ENCODE measurements at regions of chr16 and their contacts with region 1.

Region 1: GRCh38 chr16:4253394-4254150 is 11.7 kb upstream of the SRL start:
- DNase-seq: peak; percentile 99 to 100 (median 99)
- ATAC-seq: peak; percentile 94
- H3K4me3 ChIP-seq: peak overlapping the region; percentile 91
- H3K4me3 Mint-ChIP-seq: peak overlapping the region; percentile 96
- H3K27ac ChIP-seq: peak overlapping the region; percentile 86 to 88
- H3K27ac Mint-ChIP-seq: peak overlapping the region; percentile 96
- H3K4me1 ChIP-seq: peaks cover 18% of the 10 kb centered on the region
- H3K4me1 Mint-ChIP-seq: peaks cover 10% of the 10 kb centered on the region
- H3K27me3 ChIP-seq: no peaks in the 10 kb centered on the region
- H3K27me3 Mint-ChIP-seq: no peaks in the 10 kb centered on the region
- CTCF ChIP-seq: no peak

Region 2: GRCh38 chr16:3503523-3503922 is 750.0 kb before region 1 on chr16:
- CTCF ChIA-PET with region 1: no interaction called
- POLR2A ChIA-PET with region 1: no interaction called
- intact Hi-C with region 1: no loop called
- DNase-seq: peak; percentile 23 to 89 (median 62)
- ATAC-seq: peak; percentile 55
- H3K4me3 ChIP-seq: peak overlapping the region; percentile 25
- H3K4me3 Mint-ChIP-seq: peak overlapping the region; percentile 83
- H3K27ac ChIP-seq: peak overlapping the region; percentile 42 to 66
- H3K27ac Mint-ChIP-seq: peak overlapping the region; percentile 95
- H3K4me1 ChIP-seq: peaks cover 60% of the 10 kb centered on the region
- H3K4me1 Mint-ChIP-seq: peaks cover 72% of the 10 kb centered on the region
- H3K27me3 ChIP-seq: no peaks in the 10 kb centered on the region
- H3K27me3 Mint-ChIP-seq: no peaks in the 10 kb centered on the region
- CTCF ChIP-seq: no peak

Region 3: GRCh38 chr16:3880623-3881498 is 372.7 kb before region 1 on chr16 and contains the start of gene CREBBP:
- CTCF ChIA-PET with region 1: no interaction called
- POLR2A ChIA-PET with region 1: interaction called, 4 read pairs
- intact Hi-C with region 1: loop called in 1 of 2 experiments (anchors 5 kb)
- DNase-seq: peak; percentile 70 to 97 (median 86)
- ATAC-seq: peak; percentile 79
- H3K4me3 ChIP-seq: peak within 1 kb of the TSS; percentile 91
- H3K4me3 Mint-ChIP-seq: peak within 1 kb of the TSS; percentile 93
- H3K27ac ChIP-seq: no peak within 1 kb of the TSS
- H3K27ac Mint-ChIP-seq: peak within 1 kb of the TSS; percentile 94
- H3K4me1 ChIP-seq: peaks cover 37% of the 10 kb centered on the region
- H3K4me1 Mint-ChIP-seq: peaks cover 46% of the 10 kb centered on the region
- H3K27me3 ChIP-seq: peaks cover 0 to 2% of the 10 kb centered on the region in 2 experiments
- H3K27me3 Mint-ChIP-seq: peaks cover 8% of the 10 kb centered on the region
- CTCF ChIP-seq: no peak
- total RNA-seq, gene CREBBP: 145 to 152 TPM

Region 4: DNA sequence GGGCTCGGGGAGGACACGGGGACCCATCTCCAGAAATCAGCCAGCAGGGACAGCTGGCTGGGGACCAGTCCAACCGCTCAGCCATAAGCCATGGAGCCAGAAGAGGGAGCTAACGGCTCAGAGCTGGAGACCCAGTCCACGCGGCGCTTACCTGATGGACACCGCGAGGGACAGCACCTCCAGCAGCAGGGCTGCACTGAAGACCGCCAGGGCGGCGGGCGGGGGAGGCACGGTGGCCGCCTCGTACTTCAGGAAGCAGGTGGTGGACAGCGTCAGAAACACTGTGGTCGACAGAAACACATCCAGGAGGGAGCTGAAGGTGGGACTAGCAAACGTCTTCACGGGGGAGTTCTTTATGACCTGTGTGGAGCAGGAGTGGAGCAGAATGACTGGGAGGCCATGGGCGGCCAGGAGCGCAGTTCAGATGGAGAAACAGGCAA is 270.5 kb before region 1 on chr16:
- CTCF ChIA-PET with region 1: interaction called, 10 read pairs
- POLR2A ChIA-PET with region 1: interaction called, 4 read pairs
- intact Hi-C with region 1: loop called in 1 of 2 experiments (anchors 5 kb)
- DNase-seq: peak in 12 of 14 experiments; percentile 12 to 72 (median 28)
- ATAC-seq: peak; percentile 76
- H3K4me3 ChIP-seq: no peak overlapping the region
- H3K4me3 Mint-ChIP-seq: no peak overlapping the region
- H3K27ac ChIP-seq: no peak overlapping the region
- H3K27ac Mint-ChIP-seq: no peak overlapping the region
- H3K4me1 ChIP-seq: peaks cover 6% of the 10 kb centered on the region
- H3K4me1 Mint-ChIP-seq: no peaks in the 10 kb centered on the region
- H3K27me3 ChIP-seq: no peaks in the 10 kb centered on the region
- H3K27me3 Mint-ChIP-seq: no peaks in the 10 kb centered on the region
- CTCF ChIP-seq: peak; percentile 36

Region 5: GRCh38 chr16:4266372-4266771 is 12.8 kb after region 1 on chr16:
- CTCF ChIA-PET with region 1: interaction called, 83 read pairs
- POLR2A ChIA-PET with region 1: interaction called, 179 read pairs
- intact Hi-C with region 1: loop called (anchors 1 kb)
- DNase-seq: no peak
- ATAC-seq: no peak
- H3K4me3 ChIP-seq: no peak overlapping the region
- H3K4me3 Mint-ChIP-seq: no peak overlapping the region
- H3K27ac ChIP-seq: no peak overlapping the region
- H3K27ac Mint-ChIP-seq: peak overlapping the region; percentile 27
- H3K4me1 ChIP-seq: peaks cover 16% of the 10 kb centered on the region
- H3K4me1 Mint-ChIP-seq: peaks cover 14% of the 10 kb centered on the region
- H3K27me3 ChIP-seq: no peaks in the 10 kb centered on the region
- H3K27me3 Mint-ChIP-seq: no peaks in the 10 kb centered on the region
- CTCF ChIP-seq: no peak

Region 6: DNA sequence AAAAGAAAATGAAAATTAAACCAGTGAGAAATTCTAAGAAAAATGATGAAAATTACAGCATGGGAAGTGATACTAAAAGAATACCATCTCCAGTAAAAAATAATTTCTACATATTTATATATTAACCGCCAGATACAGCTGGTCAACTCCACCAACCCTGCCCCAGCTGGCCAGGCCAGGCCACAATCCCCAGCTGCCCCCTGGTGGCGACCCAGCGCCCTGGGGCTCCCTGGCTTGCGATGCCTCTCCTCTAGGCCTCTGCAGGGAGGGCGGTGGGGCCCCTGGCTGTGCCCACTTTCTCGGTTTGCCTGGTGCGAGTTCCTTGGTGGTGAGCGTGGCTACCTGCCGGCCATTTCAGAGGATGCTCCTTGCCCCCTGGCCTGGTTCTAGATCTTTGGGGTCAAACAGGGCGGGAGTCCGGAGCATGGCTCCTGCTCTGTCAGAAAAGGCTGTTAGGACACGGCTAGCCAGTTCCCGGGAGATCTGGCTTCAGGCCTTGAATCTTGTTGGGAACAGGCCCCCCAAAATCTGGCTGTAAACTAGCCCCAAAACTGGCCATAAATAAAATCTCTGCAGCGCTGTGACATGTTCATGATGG is 76.8 kb after region 1 on chr16:
- CTCF ChIA-PET with region 1: interaction called, 10 read pairs
- POLR2A ChIA-PET with region 1: interaction called, 6 read pairs
- intact Hi-C with region 1: no loop called
- DNase-seq: peak; percentile 52 to 82 (median 65)
- ATAC-seq: peak; percentile 63
- H3K4me3 ChIP-seq: no peak overlapping the region
- H3K4me3 Mint-ChIP-seq: no peak overlapping the region
- H3K27ac ChIP-seq: no peak overlapping the region
- H3K27ac Mint-ChIP-seq: no peak overlapping the region
- H3K4me1 ChIP-seq: peaks cover 19% of the 10 kb centered on the region
- H3K4me1 Mint-ChIP-seq: no peaks in the 10 kb centered on the region
- H3K27me3 ChIP-seq: peaks cover 4 to 9% of the 10 kb centered on the region in 2 experiments
- H3K27me3 Mint-ChIP-seq: no peaks in the 10 kb centered on the region
- CTCF ChIP-seq: peak; percentile 91

Region 7: GRCh38 chr16:5143761-5144620 is 890.4 kb after region 1 on chr16:
- CTCF ChIA-PET with region 1: no interaction called
- POLR2A ChIA-PET with region 1: no interaction called
- intact Hi-C with region 1: no loop called
- DNase-seq: no peak
- ATAC-seq: no peak
- H3K4me3 ChIP-seq: no peak overlapping the region
- H3K4me3 Mint-ChIP-seq: no peak overlapping the region
- H3K27ac ChIP-seq: no peak overlapping the region
- H3K27ac Mint-ChIP-seq: no peak overlapping the region
- H3K4me1 ChIP-seq: no peaks in the 10 kb centered on the region
- H3K4me1 Mint-ChIP-seq: no peaks in the 10 kb centered on the region
- H3K27me3 ChIP-seq: peaks cover 0 to 6% of the 10 kb centered on the region in 2 experiments
- H3K27me3 Mint-ChIP-seq: peaks cover 22% of the 10 kb centered on the region
- CTCF ChIP-seq: no peak

Measured in CD4-positive, alpha-beta T cell (primary cell).